ENCODE measurements at regions of chr4 and their contacts with region 1.

Region 1: GRCh38 chr4:4488405-4489404 is 53.1 kb downstream of the STX18 start:
- DNase-seq: peak; percentile 64
- ATAC-seq: peak; percentile 93
- H3K4me3 ChIP-seq: no peak overlapping the region
- H3K27ac ChIP-seq: peak overlapping the region; percentile 18
- H3K4me1 ChIP-seq: peaks cover 82% of the 10 kb centered on the region
- H3K27me3 ChIP-seq: no peaks in the 10 kb centered on the region
- CTCF ChIP-seq: peak; percentile 92
- EP300 ChIP-seq: peak in 1 of 2 experiments; percentile 60; a peak in 2 of 4 replicates
- POLR2A ChIP-seq: no peak
- RAD21 ChIP-seq: peak; percentile 63

Region 2: GRCh38 chr4:4443821-4444220 is 44.9 kb before region 1 on chr4:
- CTCF ChIA-PET with region 1: no interaction called
- POLR2A ChIA-PET with region 1: no interaction called
- in situ Hi-C with region 1: no loop called
- intact Hi-C with region 1: no loop called
- DNase-seq: no peak
- ATAC-seq: no peak
- H3K4me3 ChIP-seq: no peak overlapping the region
- H3K27ac ChIP-seq: no peak overlapping the region
- H3K4me1 ChIP-seq: no peaks in the 10 kb centered on the region
- H3K27me3 ChIP-seq: no peaks in the 10 kb centered on the region
- CTCF ChIP-seq: no peak
- EP300 ChIP-seq: no peak
- POLR2A ChIP-seq: no peak
- RAD21 ChIP-seq: no peak

Region 3: GRCh38 chr4:4472344-4472958 is 16.3 kb before region 1 on chr4:
- CTCF ChIA-PET with region 1: no interaction called
- POLR2A ChIA-PET with region 1: interaction called, 10 read pairs
- in situ Hi-C with region 1: no loop called
- intact Hi-C with region 1: no loop called
- DNase-seq: peak; percentile 68
- ATAC-seq: peak; percentile 74
- H3K4me3 ChIP-seq: no peak overlapping the region
- H3K27ac ChIP-seq: peak overlapping the region; percentile 68
- H3K4me1 ChIP-seq: peaks cover 55% of the 10 kb centered on the region
- H3K27me3 ChIP-seq: no peaks in the 10 kb centered on the region
- CTCF ChIP-seq: no peak
- EP300 ChIP-seq: peak in 1 of 2 experiments; percentile 65; a peak in 2 of 4 replicates
- POLR2A ChIP-seq: no peak
- RAD21 ChIP-seq: no peak

Region 4: DNA sequence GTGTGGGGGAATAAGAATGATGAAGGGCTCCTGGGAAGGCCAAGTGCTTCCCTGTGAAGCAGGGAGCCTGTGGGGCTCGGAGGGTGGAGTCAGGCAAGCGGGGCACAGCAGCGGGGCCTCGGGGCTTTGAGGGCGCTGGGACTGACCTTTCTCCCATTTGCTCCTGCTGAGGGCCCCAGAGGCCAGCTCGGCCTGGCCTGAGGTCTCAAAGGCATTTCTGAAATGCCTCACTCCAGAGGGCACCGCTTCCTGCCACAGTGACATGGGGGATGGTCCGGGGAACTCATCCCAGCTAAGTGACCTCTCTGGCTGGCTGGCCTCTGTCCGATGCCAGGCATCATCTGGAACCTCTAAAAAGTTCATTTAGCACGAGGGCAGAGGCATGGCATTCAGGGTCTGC is 152.0 kb after region 1 on chr4:
- CTCF ChIA-PET with region 1: no interaction called
- POLR2A ChIA-PET with region 1: interaction called, 5 read pairs
- in situ Hi-C with region 1: no loop called
- intact Hi-C with region 1: loop called (anchors 10 kb)
- DNase-seq: peak; percentile 86
- ATAC-seq: peak; percentile 94
- H3K4me3 ChIP-seq: peak overlapping the region; percentile 45 to 70 (median 63)
- H3K27ac ChIP-seq: peak overlapping the region; percentile 96
- H3K4me1 ChIP-seq: peaks cover 55% of the 10 kb centered on the region
- H3K27me3 ChIP-seq: no peaks in the 10 kb centered on the region; a peak in 1 of 5 replicates
- CTCF ChIP-seq: peak; percentile 69
- EP300 ChIP-seq: peak; percentile 46 to 82; a peak in 3 of 4 replicates
- POLR2A ChIP-seq: peak; percentile 51 to 58
- RAD21 ChIP-seq: peak; percentile 71

Region 5: DNA sequence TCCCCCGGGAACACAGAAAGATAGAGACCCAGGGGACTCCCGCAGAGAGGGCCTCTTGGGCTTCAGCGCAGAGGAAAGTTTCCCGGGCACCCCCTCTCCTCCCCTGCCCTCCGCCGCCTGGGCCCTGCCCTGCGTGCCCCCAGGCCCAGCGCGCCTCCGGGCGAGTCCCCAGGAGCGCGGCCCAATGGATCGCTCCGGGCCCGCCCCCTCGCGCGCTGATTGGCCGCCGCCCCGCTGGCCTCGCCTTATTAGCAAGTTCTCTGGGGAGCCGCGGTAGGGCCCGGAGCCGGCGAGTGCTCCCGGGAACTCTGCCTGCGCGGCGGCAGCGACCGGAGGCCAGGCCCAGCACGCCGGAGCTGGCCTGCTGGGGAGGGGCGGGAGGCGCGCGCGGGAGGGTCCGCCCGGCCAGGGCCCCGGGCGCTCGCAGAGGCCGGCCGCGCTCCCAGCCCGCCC is 370.7 kb after region 1 on chr4 and contains the start of gene MSX1:
- CTCF ChIA-PET with region 1: no interaction called
- POLR2A ChIA-PET with region 1: no interaction called
- in situ Hi-C with region 1: no loop called
- intact Hi-C with region 1: loop called (anchors 5 kb)
- DNase-seq: peak; percentile 81
- ATAC-seq: peak; percentile 94
- H3K4me3 ChIP-seq: peak within 1 kb of the TSS; percentile 86 to 98 (median 97)
- H3K27ac ChIP-seq: peak within 1 kb of the TSS; percentile 78
- H3K4me1 ChIP-seq: peaks cover 13% of the 10 kb centered on the region
- H3K27me3 ChIP-seq: no peaks in the 10 kb centered on the region; a peak in 1 of 5 replicates
- CTCF ChIP-seq: no peak; the same call in 1 of the 2 replicates
- EP300 ChIP-seq: no peak
- POLR2A ChIP-seq: peak; percentile 90 to 96
- RAD21 ChIP-seq: peak; percentile 55; the same call in 1 of the 2 replicates
- total RNA-seq, gene MSX1: 13.8 and 14.9 TPM in 2 replicates

Region 6: DNA sequence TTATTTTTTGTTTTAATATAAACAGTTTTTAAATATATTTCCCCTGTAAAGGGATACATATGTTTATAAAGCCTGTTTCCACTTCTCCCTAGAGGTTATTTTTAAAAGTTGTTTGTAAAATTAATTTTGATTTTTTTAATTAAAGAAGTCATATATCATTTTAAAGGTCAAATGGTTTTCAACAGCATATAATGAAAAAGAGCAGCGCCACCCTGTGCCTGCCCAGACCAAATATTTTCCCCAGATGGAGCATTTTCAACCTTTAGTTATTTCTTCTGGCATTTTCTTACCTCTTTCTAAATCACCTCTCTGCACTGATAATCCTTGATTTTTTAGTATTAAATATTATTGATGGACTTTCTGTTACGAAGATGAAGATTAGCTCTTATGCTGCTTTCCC is 391.8 kb after region 1 on chr4:
- CTCF ChIA-PET with region 1: interaction called, 13 read pairs
- POLR2A ChIA-PET with region 1: interaction called, 3 read pairs
- in situ Hi-C with region 1: loop called (anchors 5 kb)
- intact Hi-C with region 1: loop called (anchors 1 kb)
- DNase-seq: no peak
- ATAC-seq: no peak
- H3K4me3 ChIP-seq: no peak overlapping the region
- H3K27ac ChIP-seq: no peak overlapping the region
- H3K4me1 ChIP-seq: peaks cover 7% of the 10 kb centered on the region
- H3K27me3 ChIP-seq: peaks cover 0 to 1% of the 10 kb centered on the region in 2 experiments; a peak in 1 of 5 replicates
- CTCF ChIP-seq: peak; percentile 44
- EP300 ChIP-seq: no peak
- POLR2A ChIP-seq: no peak
- RAD21 ChIP-seq: no peak